Activated CD4-positive, alpha-beta memory T cell treated with anti-CD3 and anti-CD28 coated beads for 36 hours (primary cell): ENCODE measurements at regions of chr17 and their contacts with region 1.

Region 1: GRCh38 chr17:45385331-45385997 is 47.2 kb downstream of the ARHGAP27 start:
- DNase-seq: peak; percentile 93
- H3K4me3 Mint-ChIP-seq: no peak overlapping the region
- H3K27ac Mint-ChIP-seq: no peak overlapping the region
- H3K4me1 Mint-ChIP-seq: peaks cover 13% of the 10 kb centered on the region
- H3K27me3 Mint-ChIP-seq: peaks cover 7% of the 10 kb centered on the region

Region 2: GRCh38 chr17:45247429-45248131 is 137.9 kb before region 1 on chr17:
- CTCF ChIA-PET with region 1: interaction called, 10 read pairs
- POLR2A ChIA-PET with region 1: no interaction called
- intact Hi-C with region 1: no loop called
- DNase-seq: peak; percentile 99
- H3K4me3 Mint-ChIP-seq: peak overlapping the region; percentile 86
- H3K27ac Mint-ChIP-seq: peak overlapping the region; percentile 94
- H3K4me1 Mint-ChIP-seq: peaks cover 59% of the 10 kb centered on the region
- H3K27me3 Mint-ChIP-seq: no peaks in the 10 kb centered on the region

Region 3: GRCh38 chr17:45270828-45271418 is 114.5 kb before region 1 on chr17:
- CTCF ChIA-PET with region 1: interaction called, 249 read pairs
- POLR2A ChIA-PET with region 1: no interaction called
- intact Hi-C with region 1: no loop called
- DNase-seq: peak; percentile 64
- H3K4me3 Mint-ChIP-seq: no peak overlapping the region
- H3K27ac Mint-ChIP-seq: peak overlapping the region; percentile 8
- H3K4me1 Mint-ChIP-seq: peaks cover 16% of the 10 kb centered on the region
- H3K27me3 Mint-ChIP-seq: no peaks in the 10 kb centered on the region

Region 4: DNA sequence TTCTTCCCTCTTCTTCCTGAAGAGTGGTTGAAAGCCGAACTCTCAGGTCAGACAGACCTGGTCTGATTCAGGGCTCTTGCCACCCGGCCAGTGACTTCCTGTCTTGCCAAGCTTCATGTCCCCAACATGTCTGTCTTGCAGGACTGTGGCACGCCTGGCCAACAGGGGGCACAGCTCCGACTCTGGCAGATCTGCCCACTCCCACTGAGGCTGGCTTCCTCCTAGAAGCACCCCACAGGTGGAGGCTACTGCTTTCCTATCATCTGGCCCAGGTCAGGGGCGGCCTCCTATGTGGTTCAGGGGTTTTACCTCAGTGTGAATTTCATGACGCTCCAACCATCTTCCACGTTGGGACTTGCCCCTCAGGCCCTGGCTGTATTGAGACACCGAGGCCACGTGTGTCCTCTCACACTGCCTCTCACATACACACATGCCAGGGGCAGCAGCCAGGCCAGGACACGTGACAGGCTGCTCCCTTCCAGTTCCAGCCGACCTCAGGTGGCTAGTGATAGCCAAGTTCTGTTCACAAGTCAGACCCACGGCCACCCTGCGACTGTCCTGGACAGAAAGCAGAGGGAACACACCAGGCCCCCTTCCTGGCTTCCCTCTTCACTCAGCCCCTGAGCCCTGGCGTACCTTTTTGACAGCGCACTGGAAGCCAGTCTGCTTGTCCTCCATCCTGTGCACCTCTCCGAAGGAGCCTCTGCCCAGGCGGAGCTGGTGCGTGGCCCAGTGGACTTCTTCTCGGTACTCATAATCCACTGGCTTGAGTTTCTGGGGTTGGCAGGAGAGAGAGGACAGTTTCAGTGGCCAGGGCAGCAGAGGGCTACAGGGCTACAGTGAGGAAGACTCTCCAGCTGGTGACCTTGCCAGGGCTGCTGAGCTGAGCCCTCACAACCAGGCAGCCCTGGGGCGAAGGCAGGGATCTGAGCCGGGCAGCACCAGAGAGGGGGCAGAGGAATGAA is 101.0 kb before region 1 on chr17:
- CTCF ChIA-PET with region 1: interaction called, 14 read pairs
- POLR2A ChIA-PET with region 1: no interaction called
- intact Hi-C with region 1: no loop called
- DNase-seq: peak; percentile 61
- H3K4me3 Mint-ChIP-seq: no peak overlapping the region
- H3K27ac Mint-ChIP-seq: peak overlapping the region; percentile 85
- H3K4me1 Mint-ChIP-seq: peaks cover 4% of the 10 kb centered on the region
- H3K27me3 Mint-ChIP-seq: no peaks in the 10 kb centered on the region

Region 5: DNA sequence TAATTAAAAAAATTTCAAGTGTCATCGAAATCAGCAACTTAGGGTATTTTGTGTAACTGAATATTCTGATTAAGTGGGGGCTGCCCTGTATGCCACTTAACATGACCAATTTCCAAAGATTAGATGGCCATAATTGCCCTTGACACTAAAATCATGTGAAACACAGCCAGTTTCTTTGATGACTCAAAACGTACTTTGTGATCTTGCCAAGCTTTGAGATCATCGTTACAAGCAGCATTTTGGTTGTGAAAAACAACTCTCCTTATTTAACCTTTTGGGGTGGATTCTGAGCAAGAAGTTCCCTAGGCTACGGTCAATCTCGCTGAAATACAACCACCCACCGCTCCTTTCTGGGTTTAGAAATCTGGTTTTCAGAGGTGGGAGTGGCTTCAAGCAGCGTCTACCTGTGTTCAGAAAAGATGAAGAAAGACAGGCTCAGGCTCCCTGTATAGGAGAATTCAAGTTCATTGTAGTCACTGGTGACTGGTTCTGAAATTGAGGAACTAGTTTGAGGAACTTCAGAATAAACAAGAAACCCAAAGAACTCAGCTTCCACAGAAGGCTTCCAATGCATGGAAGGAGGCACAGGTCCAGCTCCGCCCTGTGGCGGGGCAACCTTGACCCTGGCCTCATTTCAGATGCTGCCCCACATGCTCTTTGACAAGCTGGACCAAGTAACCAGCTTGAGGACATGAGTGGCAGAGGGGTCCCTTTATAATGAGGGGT is 78.0 kb before region 1 on chr17:
- CTCF ChIA-PET with region 1: interaction called, 15 read pairs
- POLR2A ChIA-PET with region 1: interaction called, 3 read pairs
- intact Hi-C with region 1: loop called (anchors 2 kb)
- DNase-seq: peak; percentile 80
- H3K4me3 Mint-ChIP-seq: peak overlapping the region; percentile 53
- H3K27ac Mint-ChIP-seq: peak overlapping the region; percentile 97
- H3K4me1 Mint-ChIP-seq: peaks cover 84% of the 10 kb centered on the region
- H3K27me3 Mint-ChIP-seq: no peaks in the 10 kb centered on the region

Region 6: DNA sequence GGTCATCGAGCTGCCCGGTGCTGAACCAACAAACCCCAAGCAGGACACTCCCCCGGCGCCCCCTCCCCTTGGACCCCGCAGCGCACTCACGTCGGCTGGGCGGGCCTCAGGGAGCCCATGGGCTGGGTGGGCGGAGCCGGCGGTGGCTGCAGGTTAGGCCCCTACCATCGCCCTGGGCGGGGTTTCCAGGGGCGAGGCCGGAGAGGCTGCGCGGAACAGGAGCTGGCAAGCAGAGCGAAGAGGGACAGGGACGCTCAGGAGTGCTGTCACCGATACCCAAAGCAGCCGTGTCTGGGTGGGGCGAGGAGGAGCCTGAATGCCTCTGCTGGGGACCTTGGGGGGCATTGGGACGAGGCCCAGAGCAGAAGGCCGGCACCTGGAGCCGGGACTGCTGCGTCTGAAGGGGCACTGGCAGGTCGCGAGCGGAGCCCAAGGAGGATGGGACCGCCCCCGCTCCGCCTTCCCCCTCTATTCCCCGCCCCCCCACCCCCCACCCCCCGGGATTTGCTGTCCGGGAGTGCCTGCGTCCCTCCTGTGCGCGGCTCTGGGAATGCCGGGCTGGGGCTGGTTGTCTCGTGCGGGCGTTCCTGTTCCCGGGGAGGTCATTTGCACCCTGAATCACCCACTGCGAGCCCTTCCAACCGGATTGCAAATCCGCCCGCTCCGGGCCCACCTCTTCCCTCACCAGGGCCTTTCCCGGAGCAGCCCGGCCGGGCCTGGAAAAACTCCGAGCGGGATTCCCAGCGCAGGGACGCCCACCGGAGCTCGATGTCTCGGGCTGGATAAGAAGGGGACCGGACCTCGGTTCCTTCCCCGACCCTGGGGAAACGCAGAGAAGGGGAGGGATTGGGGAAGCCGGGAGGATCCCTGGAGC is 46.3 kb after region 1 on chr17:
- CTCF ChIA-PET with region 1: interaction called, 3 read pairs
- POLR2A ChIA-PET with region 1: no interaction called
- intact Hi-C with region 1: loop called (anchors 10 kb)
- DNase-seq: peak; percentile 86
- H3K4me3 Mint-ChIP-seq: peak overlapping the region; percentile 75
- H3K27ac Mint-ChIP-seq: no peak overlapping the region
- H3K4me1 Mint-ChIP-seq: peaks cover 21% of the 10 kb centered on the region
- H3K27me3 Mint-ChIP-seq: no peaks in the 10 kb centered on the region